ENCODE measurements at regions of chr5 and their contacts with region 1.

Region 1: DNA sequence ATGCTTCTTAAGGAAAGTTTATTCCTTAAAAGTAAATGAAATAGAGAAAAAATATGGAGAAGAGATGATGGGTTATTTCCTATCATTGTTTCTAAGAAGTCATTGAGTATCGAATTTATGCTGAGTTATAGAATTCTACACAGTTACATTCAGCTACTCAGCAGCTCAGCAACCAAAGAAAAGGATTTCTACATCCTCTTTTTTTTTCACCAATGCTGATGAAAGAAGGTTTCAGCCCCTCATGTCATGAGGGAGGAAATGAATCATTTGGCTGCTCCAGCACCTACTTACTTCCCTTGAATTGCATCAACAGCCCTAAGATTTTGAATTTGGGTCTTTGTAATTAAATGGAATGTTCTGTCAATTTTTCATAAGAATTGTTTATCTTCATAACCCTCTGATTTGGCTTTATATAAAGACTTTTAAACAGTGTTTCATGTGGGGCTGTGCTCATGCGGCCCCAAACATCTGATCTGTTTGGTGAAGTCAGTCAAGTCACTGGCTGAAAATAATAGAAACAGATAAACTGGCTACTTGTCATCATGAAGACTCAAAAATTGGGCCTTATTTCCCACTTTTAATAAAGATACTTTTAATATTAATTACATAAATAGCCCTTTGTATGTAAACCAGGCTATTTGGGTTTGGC is 18.5 kb upstream of the SNX2 start:
- DNase-seq: no peak
- H3K4me3 Mint-ChIP-seq: no peak overlapping the region
- H3K27ac Mint-ChIP-seq: no peak overlapping the region
- H3K4me1 Mint-ChIP-seq: peaks cover 22% of the 10 kb centered on the region
- H3K27me3 Mint-ChIP-seq: no peaks in the 10 kb centered on the region

Region 2: DNA sequence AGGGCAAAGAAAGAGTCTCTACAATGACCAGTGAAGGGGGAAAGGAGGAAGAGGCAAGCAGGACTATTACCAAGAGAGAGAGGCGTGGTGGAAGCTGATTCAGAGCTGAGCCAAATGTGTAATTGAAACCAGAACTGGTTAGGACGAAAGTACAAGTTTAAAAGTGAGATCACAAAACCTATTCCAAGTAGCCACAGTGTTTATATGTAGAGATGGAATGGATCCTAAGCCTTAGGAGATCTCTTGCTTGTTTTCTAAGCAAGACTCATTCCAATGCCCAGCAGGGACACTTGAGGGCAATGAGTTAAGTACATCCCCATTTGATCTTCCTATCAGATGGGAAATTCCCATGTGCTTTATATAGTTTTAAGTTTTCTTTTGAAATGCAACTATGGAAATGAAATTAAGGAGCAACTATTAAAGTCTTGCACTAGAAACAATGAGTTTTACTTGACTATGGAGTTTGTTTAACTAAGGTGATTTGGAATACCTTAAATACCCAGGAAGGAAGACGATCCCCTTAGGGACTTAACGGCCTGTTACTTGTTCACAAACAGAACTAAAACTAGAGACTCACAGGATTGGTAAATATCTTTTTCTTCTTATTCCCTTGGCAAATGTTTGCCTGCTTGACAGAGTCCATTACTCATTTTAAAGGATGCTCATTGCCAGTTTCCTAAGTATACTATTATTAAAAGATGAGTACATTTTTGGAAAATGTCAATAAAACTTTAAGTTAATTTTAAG is 32.6 kb before region 1 on chr5:
- intact Hi-C with region 1: loop called (anchors 5 kb)
- DNase-seq: no peak
- H3K4me3 Mint-ChIP-seq: no peak overlapping the region
- H3K27ac Mint-ChIP-seq: no peak overlapping the region
- H3K4me1 Mint-ChIP-seq: peaks cover 10% of the 10 kb centered on the region
- H3K27me3 Mint-ChIP-seq: peaks cover 23% of the 10 kb centered on the region

Region 3: DNA sequence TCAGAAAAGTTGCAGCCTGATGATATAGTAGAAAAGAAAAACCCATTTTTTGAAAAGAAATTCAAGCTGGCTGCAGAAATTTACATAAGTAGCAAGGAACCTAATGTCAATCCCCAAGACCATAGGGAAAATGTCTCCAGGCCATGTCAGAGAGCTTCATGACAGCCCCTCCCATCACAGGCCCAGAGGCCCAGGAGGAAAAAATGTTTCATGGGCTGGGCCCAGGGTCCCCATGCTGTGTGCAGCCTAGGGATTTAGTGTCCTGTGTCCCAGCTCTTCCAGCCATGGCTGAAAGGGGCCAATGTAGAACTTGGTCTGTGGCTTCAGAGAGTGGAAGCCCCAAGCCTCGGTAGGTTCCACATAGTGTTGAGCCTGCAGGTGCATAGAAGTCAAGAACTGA is 975.9 kb after region 1 on chr5:
- intact Hi-C with region 1: no loop called
- DNase-seq: no peak
- H3K4me3 Mint-ChIP-seq: no peak overlapping the region
- H3K27ac Mint-ChIP-seq: no peak overlapping the region
- H3K4me1 Mint-ChIP-seq: no peaks in the 10 kb centered on the region
- H3K27me3 Mint-ChIP-seq: no peaks in the 10 kb centered on the region